ENCODE measurements at regions of chr1 and their contacts with region 1.

Region 1: DNA sequence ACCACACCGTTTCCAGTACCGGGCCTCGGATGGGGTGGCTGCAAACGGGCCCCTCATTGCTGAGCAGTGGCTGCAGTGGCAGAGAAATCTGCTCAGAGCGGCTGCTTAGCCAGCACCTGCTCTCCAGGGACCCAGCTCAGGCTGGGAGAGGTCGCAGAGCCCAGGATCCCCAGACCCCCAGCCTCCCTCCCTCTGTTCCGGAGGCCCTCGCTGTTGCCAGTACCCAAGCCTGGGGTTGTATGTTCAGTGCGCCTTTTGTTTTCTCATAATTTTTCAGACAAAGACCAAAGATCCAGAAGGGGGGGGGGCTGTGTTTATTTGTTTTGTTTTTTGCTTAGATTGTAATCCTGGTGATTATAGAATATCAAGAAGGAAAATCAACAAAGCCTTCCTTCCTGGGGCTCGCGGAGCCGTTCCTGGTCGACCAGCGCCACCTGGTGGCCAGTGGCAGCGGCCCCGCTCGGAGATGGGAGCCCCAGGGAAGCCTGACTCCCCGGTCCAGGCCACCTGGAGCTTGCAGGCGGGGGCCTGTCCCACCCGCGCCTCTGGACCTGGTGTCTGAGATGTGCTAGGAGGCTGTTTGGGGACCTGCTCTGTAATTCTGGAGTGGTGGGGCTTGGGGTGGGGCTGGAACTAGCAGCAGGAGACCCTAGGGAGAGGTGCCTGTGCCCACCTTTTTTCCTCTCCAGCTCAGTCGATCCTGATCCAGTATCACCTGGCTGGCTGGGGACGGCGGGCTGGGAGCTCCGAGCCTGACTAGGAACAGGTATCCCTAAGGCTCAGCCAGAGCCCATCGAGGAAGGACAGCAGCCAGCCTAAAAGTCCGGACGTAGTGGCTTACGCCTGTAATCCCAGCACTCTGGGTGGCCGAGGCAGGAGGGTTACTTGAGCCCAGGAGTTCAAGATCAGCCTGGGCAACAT is 123.9 kb upstream of the VAMP3 start:
- DNase-seq: peak; percentile 16
- ATAC-seq: peak; percentile 92
- H3K4me3 ChIP-seq: no peak overlapping the region
- H3K27ac ChIP-seq: no peak overlapping the region; the same call in 1 of the 2 replicates
- H3K4me1 ChIP-seq: 0 out of 4 replicates have a peak, but pooled peaks cover 0 to 2% of the 10 kb centered on the region in 2 experiments
- H3K27me3 ChIP-seq: no peaks in the 10 kb centered on the region
- CTCF ChIP-seq: peak; percentile 86 to 96 (median 92)
- POLR2A ChIP-seq: no peak
- RAD21 ChIP-seq: peak; percentile 97

Region 2: DNA sequence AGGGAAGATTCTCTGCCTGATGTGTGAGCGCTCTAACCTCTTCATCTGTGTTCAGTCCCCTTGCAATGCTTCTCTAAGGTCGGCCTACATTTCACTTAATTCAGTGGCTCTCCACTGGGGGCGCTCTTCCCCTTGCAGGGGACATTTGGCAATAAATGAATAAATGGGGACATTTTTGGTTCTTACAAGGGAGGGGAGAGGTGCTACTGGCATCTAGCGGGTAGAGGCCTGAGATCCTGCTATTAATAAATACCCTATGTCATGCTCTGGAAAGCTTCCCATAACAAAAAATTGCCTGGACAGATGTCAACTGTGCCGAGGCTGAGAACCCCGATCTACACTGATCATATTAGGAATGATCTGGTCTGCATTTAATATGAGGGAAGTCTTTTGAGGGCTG is 919.7 kb before region 1 on chr1:
- CTCF ChIA-PET with region 1: no interaction called
- POLR2A ChIA-PET with region 1: no interaction called
- RAD21 ChIA-PET with region 1: no interaction called
- intact Hi-C with region 1: loop called (anchors 10 kb)
- DNase-seq: peak; percentile 71
- ATAC-seq: peak; percentile 91
- H3K4me3 ChIP-seq: no peak overlapping the region
- H3K27ac ChIP-seq: no peak overlapping the region
- H3K4me1 ChIP-seq: peaks cover 2 to 21% of the 10 kb centered on the region in 2 experiments; a peak in 2 of 4 replicates
- H3K27me3 ChIP-seq: no peaks in the 10 kb centered on the region
- CTCF ChIP-seq: peak; percentile 90 to 97 (median 91)
- POLR2A ChIP-seq: no peak
- RAD21 ChIP-seq: peak; percentile 74

Region 3: DNA sequence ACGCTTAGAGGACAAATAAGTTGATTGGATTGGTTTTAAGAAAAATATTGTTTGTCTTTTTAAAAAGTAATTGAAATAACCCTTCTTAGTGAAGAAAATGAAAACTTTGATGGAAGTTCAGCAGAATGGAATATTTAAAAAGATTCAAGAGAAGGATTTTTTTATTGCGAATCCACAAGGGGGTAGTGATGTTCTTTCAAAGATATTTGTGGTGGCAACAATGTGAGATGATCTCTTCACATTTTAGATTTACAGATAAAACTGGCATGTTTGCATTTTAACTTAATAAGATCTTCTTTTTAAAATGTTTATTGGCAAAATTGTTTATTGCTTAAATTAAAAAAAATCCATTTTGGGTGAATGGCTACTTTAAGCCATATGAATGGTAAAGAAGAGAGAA is 853.1 kb before region 1 on chr1:
- CTCF ChIA-PET with region 1: no interaction called
- POLR2A ChIA-PET with region 1: no interaction called
- RAD21 ChIA-PET with region 1: no interaction called
- intact Hi-C with region 1: loop called (anchors 10 kb)
- DNase-seq: peak; percentile 26
- ATAC-seq: no peak
- H3K4me3 ChIP-seq: no peak overlapping the region
- H3K27ac ChIP-seq: no peak overlapping the region
- H3K4me1 ChIP-seq: no peaks in the 10 kb centered on the region
- H3K27me3 ChIP-seq: no peaks in the 10 kb centered on the region
- CTCF ChIP-seq: peak in 2 of 3 experiments; percentile 60 to 62; a peak in 3 of 6 replicates
- POLR2A ChIP-seq: no peak
- RAD21 ChIP-seq: peak; percentile 69; the same call in 1 of the 2 replicates

Region 4: GRCh38 chr1:7042322-7043190 is 604.7 kb before region 1 on chr1:
- CTCF ChIA-PET with region 1: interaction called, 24 read pairs
- POLR2A ChIA-PET with region 1: no interaction called
- RAD21 ChIA-PET with region 1: interaction called in 1 of 2 experiments, 4 read pairs
- intact Hi-C with region 1: loop called (anchors 1 kb)
- DNase-seq: peak; percentile 10
- ATAC-seq: peak; percentile 87
- H3K4me3 ChIP-seq: no peak overlapping the region
- H3K27ac ChIP-seq: no peak overlapping the region
- H3K4me1 ChIP-seq: no peaks in the 10 kb centered on the region
- H3K27me3 ChIP-seq: peaks cover 11% of the 10 kb centered on the region
- CTCF ChIP-seq: peak; percentile 49 to 74 (median 69)
- POLR2A ChIP-seq: no peak
- RAD21 ChIP-seq: peak; percentile 75

Region 5: GRCh38 chr1:7224644-7225043 is 422.6 kb before region 1 on chr1:
- CTCF ChIA-PET with region 1: interaction called, 20 read pairs
- POLR2A ChIA-PET with region 1: no interaction called
- RAD21 ChIA-PET with region 1: interaction called in 1 of 2 experiments, 4 read pairs
- intact Hi-C with region 1: loop called (anchors 1 kb)
- DNase-seq: peak; percentile 37
- ATAC-seq: peak; percentile 91
- H3K4me3 ChIP-seq: no peak overlapping the region
- H3K27ac ChIP-seq: no peak overlapping the region
- H3K4me1 ChIP-seq: peaks cover 9 to 24% of the 10 kb centered on the region in 2 experiments
- H3K27me3 ChIP-seq: no peaks in the 10 kb centered on the region
- CTCF ChIP-seq: peak; percentile 55 to 80 (median 71)
- POLR2A ChIP-seq: no peak
- RAD21 ChIP-seq: peak; percentile 96

Region 6: GRCh38 chr1:7454052-7454815 is 193.0 kb before region 1 on chr1:
- CTCF ChIA-PET with region 1: interaction called, 3 read pairs
- POLR2A ChIA-PET with region 1: no interaction called
- RAD21 ChIA-PET with region 1: interaction called in 1 of 2 experiments, 4 read pairs
- intact Hi-C with region 1: loop called (anchors 1 kb)
- DNase-seq: no peak
- ATAC-seq: peak; percentile 95
- H3K4me3 ChIP-seq: no peak overlapping the region
- H3K27ac ChIP-seq: no peak overlapping the region
- H3K4me1 ChIP-seq: peaks cover 0 to 7% of the 10 kb centered on the region in 2 experiments; a peak in 2 of 4 replicates
- H3K27me3 ChIP-seq: no peaks in the 10 kb centered on the region
- CTCF ChIP-seq: peak; percentile 62 to 83 (median 68); a peak in 5 of 6 replicates
- POLR2A ChIP-seq: no peak
- RAD21 ChIP-seq: peak; percentile 81